Activated naive CD4-positive, alpha-beta T cell treated with anti-CD3 and anti-CD28 coated beads, Interleukin-2, amount 10 ng/mL, durations not matched to agents 7 days and 5 days (primary cell): ENCODE measurements at regions of chr11 and their contacts with region 1.

Region 1: DNA sequence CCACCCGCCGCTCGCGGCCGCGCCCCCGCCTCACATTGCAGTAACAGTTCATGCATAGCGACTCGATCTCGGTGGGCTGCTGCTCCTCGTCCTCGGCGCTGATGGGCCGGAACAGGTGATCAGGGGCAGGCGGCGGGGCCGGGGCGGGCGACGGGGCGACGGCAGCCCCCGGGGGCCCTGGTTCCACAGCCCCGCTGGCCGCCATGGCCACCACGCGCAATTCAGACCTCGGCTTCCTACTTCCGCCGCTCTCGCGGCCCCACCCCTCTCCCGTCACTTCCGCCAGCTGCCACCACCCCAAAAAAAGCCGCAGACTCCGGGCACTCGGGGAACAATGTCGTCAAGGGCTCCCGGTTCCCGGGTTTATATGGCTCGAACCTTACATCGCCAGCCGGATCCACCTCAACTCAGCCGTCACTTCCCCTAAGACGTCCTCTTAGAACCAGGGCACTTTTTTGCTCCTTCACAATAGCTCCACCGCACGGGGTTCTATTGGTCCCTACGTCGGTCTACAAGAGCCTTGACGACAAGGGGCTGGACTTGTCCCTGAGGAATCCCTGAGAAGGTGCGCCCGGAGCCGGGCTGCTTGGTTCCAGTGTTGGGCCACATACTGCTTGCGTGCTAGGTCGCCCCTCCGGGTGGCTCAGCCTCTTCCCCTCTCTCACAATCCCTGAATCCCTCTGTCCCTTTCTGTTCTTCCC is at the start of gene ZPR1:
- DNase-seq: peak; percentile 92
- H3K4me3 Mint-ChIP-seq: peak within 1 kb of the TSS; percentile 94
- H3K27ac Mint-ChIP-seq: peak within 1 kb of the TSS; percentile 89
- H3K4me1 Mint-ChIP-seq: peaks cover 42% of the 10 kb centered on the region
- H3K27me3 Mint-ChIP-seq: peaks cover 39% of the 10 kb centered on the region

Region 2: GRCh38 chr11:116772443-116773202 is 15.3 kb before region 1 on chr11 and contains the start of gene BUD13:
- CTCF ChIA-PET with region 1: interaction called, 22 read pairs
- DNase-seq: peak; percentile 95
- H3K4me3 Mint-ChIP-seq: peak within 1 kb of the TSS; percentile 99
- H3K27ac Mint-ChIP-seq: peak within 1 kb of the TSS; percentile 96
- H3K4me1 Mint-ChIP-seq: peaks cover 59% of the 10 kb centered on the region
- H3K27me3 Mint-ChIP-seq: no peaks in the 10 kb centered on the region

Region 3: GRCh38 chr11:116853461-116854073 is 65.6 kb after region 1 on chr11:
- CTCF ChIA-PET with region 1: interaction called, 11 read pairs
- DNase-seq: peak; percentile 73
- H3K4me3 Mint-ChIP-seq: peak overlapping the region; percentile 2
- H3K27ac Mint-ChIP-seq: peak overlapping the region; percentile 96
- H3K4me1 Mint-ChIP-seq: peaks cover 74% of the 10 kb centered on the region
- H3K27me3 Mint-ChIP-seq: no peaks in the 10 kb centered on the region

Region 4: DNA sequence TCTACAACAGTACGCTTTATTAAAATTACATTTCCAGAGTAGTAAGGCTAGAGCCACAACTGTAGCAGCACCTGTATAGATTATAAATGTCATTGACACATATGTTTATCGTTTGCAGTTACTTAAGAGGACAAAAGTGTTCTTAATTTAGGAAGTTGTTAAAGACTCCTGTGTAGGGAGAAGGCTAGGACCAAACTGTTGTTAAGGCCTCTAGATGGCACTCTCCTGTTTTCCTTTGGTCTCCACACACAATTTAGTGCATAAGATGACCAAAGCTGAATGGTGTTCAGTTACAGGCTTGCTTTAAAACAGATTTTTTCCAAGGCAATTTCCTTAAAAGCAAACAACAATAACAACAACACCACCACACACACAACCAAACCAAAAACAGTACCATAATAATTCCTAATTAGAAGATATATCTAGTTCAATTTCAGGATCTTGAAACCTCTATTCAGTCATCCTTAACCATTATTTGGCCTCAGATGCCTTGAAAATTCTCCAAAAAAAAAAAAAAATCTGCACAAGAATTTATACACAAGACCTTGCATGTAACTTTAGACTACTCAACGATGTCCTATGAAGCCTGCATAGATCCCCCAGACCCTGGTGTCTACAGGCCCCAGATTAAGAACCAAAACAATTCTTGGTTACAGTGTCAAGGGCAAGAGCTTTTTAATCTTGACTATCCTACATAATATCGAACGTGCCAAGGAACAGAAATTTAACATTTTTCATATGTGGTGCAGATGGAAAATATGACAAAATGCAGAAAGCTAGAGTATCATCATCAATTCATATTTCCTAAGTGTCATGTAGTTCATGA is 92.1 kb after region 1 on chr11:
- CTCF ChIA-PET with region 1: interaction called, 12 read pairs
- DNase-seq: peak; percentile 38
- H3K4me3 Mint-ChIP-seq: no peak overlapping the region
- H3K27ac Mint-ChIP-seq: no peak overlapping the region
- H3K4me1 Mint-ChIP-seq: peaks cover 3% of the 10 kb centered on the region
- H3K27me3 Mint-ChIP-seq: no peaks in the 10 kb centered on the region

Region 5: DNA sequence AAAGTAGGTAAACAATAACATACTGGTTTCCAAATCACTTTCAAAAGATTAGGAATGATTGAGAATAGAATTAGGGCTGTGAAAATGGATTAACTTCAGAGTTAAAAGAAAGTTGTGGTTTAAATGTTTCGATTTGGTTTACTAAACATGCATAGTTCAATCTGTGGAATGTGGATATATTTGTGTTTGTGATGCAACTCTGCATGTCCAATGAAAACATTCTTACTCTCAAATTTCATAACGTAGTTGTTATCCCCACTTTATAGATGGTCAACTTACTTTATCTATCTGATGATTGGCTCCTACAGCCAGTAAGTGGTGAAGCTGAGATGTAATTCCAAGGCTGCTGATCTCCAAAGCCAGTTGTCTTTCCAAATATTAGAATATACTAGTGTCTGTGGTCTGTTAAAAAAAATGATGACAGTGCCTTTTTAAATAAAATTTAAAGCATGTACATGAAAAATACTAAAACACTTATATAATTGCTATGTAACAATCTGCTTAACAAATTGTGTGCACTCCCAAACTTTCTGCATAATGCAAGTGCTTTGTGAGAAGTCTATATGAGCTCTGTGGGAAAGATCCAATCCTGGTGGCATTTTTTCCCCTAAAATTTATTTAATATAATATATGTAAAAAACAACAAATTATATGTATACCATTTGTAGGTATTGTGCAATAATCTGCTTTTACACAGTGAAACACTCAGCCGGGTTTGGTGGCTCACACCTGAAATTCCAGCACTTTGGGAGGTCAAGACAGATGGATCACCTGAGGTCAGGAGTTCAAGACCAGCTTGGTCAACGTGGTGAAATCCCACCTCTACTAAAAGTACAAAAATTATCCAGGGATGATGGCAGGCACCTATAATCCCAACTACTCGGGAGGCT is 320.0 kb after region 1 on chr11:
- CTCF ChIA-PET with region 1: interaction called, 53 read pairs
- DNase-seq: no peak
- H3K4me3 Mint-ChIP-seq: no peak overlapping the region
- H3K27ac Mint-ChIP-seq: no peak overlapping the region
- H3K4me1 Mint-ChIP-seq: peaks cover 4% of the 10 kb centered on the region
- H3K27me3 Mint-ChIP-seq: peaks cover 5% of the 10 kb centered on the region